CD4-positive, alpha-beta memory T cell (primary cell): ENCODE measurements at regions of chr4 and their contacts with region 1.

Region 1: DNA sequence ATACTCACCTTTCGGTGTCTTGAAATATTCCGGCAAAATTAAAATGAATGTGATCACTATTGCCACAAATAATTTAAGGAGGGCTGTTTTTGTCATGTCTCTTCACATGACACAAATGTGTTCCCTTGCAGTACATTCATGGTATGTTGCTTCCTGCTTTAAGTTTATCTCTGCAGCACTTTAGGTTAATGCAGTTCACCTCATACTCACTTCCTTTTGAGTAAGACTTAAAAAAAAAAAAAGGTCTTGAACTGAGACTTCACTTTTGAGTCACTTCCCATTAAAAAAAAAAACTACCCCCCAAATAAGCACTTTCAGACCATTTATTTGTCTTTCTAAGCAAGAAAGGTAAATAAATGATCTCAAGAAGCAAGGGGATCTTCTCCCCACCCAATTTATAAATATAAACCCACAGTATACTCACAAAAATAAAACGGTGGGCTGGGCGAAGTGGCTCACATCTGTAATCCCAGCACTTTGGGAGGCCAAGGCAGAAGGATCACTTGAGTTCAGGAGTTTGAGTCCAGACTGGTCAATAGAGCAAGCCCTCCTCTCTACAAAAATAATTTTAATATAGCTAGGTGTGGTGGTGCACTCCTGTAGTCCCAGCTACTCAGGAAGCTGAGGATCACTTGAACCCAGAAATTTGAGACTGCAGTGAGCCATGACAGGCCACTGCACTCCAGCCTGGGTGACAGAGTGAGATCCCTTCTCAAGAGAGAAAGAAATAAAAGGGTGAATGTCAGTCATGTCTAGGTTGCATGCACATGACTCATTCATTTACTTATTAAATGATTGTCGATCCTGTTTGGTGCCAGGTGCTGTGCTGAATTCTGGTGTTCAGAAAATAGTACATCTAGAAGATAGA is at the start of gene TMEM156:
- DNase-seq: peak; percentile 65 to 81 (median 70)
- H3K4me3 ChIP-seq: peak within 1 kb of the TSS; percentile 51 to 65
- H3K4me3 Mint-ChIP-seq: peak within 1 kb of the TSS; percentile 75 to 93 (median 89)
- H3K27ac ChIP-seq: peak within 1 kb of the TSS; percentile 68
- H3K27ac Mint-ChIP-seq: peak within 1 kb of the TSS; percentile 85 to 97 (median 93)
- H3K4me1 ChIP-seq: peaks cover 43% of the 10 kb centered on the region
- H3K4me1 Mint-ChIP-seq: peaks cover 20 to 55% (median 36%) of the 10 kb centered on the region in 4 donors
- H3K27me3 ChIP-seq: no peaks in the 10 kb centered on the region
- H3K27me3 Mint-ChIP-seq: no peaks in the 10 kb centered on the region
- total RNA-seq, gene TMEM156: 16.8 to 19.3 TPM

Region 2: DNA sequence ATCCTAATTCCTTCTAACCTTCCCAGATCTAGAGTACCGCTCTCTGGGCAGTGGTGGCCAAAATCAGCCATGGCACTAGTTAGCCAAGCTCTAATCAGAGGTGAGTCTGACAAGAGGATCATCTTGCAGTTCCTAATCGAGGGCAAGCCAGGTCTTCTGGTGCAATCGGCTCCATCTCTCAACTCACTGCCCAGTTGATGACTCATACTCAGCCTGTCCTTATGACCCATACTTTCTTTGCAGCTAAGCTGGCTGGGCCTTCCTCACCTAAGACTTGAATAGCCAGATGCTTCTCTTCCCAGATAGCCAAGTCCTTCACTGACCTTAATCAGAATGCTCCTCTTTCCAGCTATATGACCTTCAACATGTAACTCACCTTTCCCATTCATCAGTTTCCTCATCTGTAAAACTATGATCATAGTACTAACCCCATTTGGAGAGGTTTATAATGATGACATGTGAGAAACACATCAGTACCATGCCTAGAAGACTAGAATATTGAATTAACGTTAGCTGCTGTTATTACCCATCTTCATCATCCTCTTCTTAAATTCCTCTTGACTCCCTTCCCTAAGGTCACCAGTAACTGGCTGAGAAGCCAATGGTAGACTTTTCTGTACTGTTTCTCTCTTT is 1403.4 kb before region 1 on chr4:
- CTCF ChIA-PET with region 1: no interaction called
- POLR2A ChIA-PET with region 1: no interaction called
- intact Hi-C with region 1: no loop called
- DNase-seq: no peak
- H3K4me3 ChIP-seq: no peak overlapping the region
- H3K4me3 Mint-ChIP-seq: no peak overlapping the region
- H3K27ac ChIP-seq: no peak overlapping the region
- H3K27ac Mint-ChIP-seq: peak overlapping the region in 2 of 7 donors; percentile 1 to 52
- H3K4me1 ChIP-seq: no peaks in the 10 kb centered on the region
- H3K4me1 Mint-ChIP-seq: peaks cover 0 to 2% (median 1%) of the 10 kb centered on the region in 4 donors
- H3K27me3 ChIP-seq: no peaks in the 10 kb centered on the region
- H3K27me3 Mint-ChIP-seq: no peaks in the 10 kb centered on the region

Region 3: GRCh38 chr4:38948551-38948950 is 83.9 kb before region 1 on chr4:
- CTCF ChIA-PET with region 1: interaction called, 4 read pairs
- POLR2A ChIA-PET with region 1: interaction called, 4 read pairs
- intact Hi-C with region 1: loop called (anchors 5 kb)
- DNase-seq: no peak
- H3K4me3 ChIP-seq: no peak overlapping the region
- H3K4me3 Mint-ChIP-seq: no peak overlapping the region
- H3K27ac ChIP-seq: no peak overlapping the region
- H3K27ac Mint-ChIP-seq: peak overlapping the region; percentile 83 to 100 (median 97)
- H3K4me1 ChIP-seq: peaks cover 21% of the 10 kb centered on the region
- H3K4me1 Mint-ChIP-seq: peaks cover 18 to 25% (median 19%) of the 10 kb centered on the region in 4 donors
- H3K27me3 ChIP-seq: no peaks in the 10 kb centered on the region
- H3K27me3 Mint-ChIP-seq: peaks cover 0 to 2% of the 10 kb centered on the region in 2 donors

Region 4: GRCh38 chr4:38980903-38981676 is 51.4 kb before region 1 on chr4:
- CTCF ChIA-PET with region 1: interaction called, 3 read pairs
- POLR2A ChIA-PET with region 1: interaction called, 3 read pairs
- intact Hi-C with region 1: loop called (anchors 5 kb)
- DNase-seq: no peak
- H3K4me3 ChIP-seq: no peak overlapping the region
- H3K4me3 Mint-ChIP-seq: peak overlapping the region in 2 of 8 donors; percentile 8 to 17
- H3K27ac ChIP-seq: no peak overlapping the region
- H3K27ac Mint-ChIP-seq: peak overlapping the region in 6 of 7 donors; percentile 7 to 89 (median 37)
- H3K4me1 ChIP-seq: peaks cover 19% of the 10 kb centered on the region
- H3K4me1 Mint-ChIP-seq: peaks cover 20 to 30% (median 26%) of the 10 kb centered on the region in 4 donors
- H3K27me3 ChIP-seq: no peaks in the 10 kb centered on the region
- H3K27me3 Mint-ChIP-seq: no peaks in the 10 kb centered on the region

Region 5: GRCh38 chr4:39067451-39067850 is 35.0 kb after region 1 on chr4:
- CTCF ChIA-PET with region 1: no interaction called
- POLR2A ChIA-PET with region 1: interaction called, 3 read pairs
- intact Hi-C with region 1: loop called (anchors 5 kb)
- DNase-seq: no peak
- H3K4me3 ChIP-seq: no peak overlapping the region
- H3K4me3 Mint-ChIP-seq: no peak overlapping the region
- H3K27ac ChIP-seq: no peak overlapping the region
- H3K27ac Mint-ChIP-seq: no peak overlapping the region
- H3K4me1 ChIP-seq: peaks cover 3% of the 10 kb centered on the region
- H3K4me1 Mint-ChIP-seq: peaks cover 8 to 33% (median 19%) of the 10 kb centered on the region in 4 donors
- H3K27me3 ChIP-seq: no peaks in the 10 kb centered on the region
- H3K27me3 Mint-ChIP-seq: no peaks in the 10 kb centered on the region

Region 6: DNA sequence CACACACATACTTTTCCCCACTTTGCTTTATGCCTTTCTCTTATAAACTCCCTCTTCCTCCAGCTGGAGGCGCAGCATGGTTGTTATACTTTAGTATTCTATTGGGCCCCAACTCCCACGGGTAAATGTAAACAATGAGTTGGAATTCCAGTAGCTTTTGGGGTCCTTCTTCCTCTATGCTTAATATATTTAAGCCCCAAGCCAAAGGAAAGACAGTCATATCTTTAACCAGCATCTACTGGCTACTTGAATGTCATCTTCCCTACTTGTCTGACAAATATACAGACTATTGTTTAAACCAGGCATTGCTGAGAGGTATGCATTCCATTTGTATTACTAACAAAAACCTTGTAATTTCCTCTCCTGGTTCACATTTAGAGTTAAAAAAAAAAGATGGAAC is 222.8 kb after region 1 on chr4:
- CTCF ChIA-PET with region 1: no interaction called
- POLR2A ChIA-PET with region 1: no interaction called
- intact Hi-C with region 1: no loop called
- DNase-seq: no peak
- H3K4me3 ChIP-seq: no peak overlapping the region
- H3K4me3 Mint-ChIP-seq: no peak overlapping the region
- H3K27ac ChIP-seq: no peak overlapping the region
- H3K27ac Mint-ChIP-seq: no peak overlapping the region
- H3K4me1 ChIP-seq: no peaks in the 10 kb centered on the region
- H3K4me1 Mint-ChIP-seq: no peaks in the 10 kb centered on the region
- H3K27me3 ChIP-seq: no peaks in the 10 kb centered on the region
- H3K27me3 Mint-ChIP-seq: no peaks in the 10 kb centered on the region

Region 7: DNA sequence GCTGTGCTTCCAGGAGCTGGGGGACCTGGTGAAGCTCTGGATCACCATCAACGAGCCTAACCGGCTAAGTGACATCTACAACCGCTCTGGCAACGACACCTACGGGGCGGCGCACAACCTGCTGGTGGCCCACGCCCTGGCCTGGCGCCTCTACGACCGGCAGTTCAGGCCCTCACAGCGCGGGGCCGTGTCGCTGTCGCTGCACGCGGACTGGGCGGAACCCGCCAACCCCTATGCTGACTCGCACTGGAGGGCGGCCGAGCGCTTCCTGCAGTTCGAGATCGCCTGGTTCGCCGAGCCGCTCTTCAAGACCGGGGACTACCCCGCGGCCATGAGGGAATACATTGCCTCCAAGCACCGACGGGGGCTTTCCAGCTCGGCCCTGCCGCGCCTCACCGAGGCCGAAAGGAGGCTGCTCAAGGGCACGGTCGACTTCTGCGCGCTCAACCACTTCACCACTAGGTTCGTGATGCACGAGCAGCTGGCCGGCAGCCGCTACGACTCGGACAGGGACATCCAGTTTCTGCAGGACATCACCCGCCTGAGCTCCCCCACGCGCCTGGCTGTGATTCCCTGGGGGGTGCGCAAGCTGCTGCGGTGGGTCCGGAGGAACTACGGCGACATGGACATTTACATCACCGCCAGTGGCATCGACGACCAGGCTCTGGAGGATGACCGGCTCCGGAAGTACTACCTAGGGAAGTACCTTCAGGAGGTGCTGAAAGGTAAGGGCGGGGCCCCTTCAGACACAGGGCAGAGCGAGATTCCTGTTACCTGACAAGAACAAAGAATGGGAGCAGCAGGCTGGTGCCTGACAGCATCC is 414.5 kb after region 1 on chr4:
- CTCF ChIA-PET with region 1: no interaction called
- POLR2A ChIA-PET with region 1: no interaction called
- intact Hi-C with region 1: no loop called
- DNase-seq: peak in 4 of 5 donors; percentile 35 to 71 (median 45)
- H3K4me3 ChIP-seq: no peak overlapping the region
- H3K4me3 Mint-ChIP-seq: peak overlapping the region; percentile 40 to 75 (median 70)
- H3K27ac ChIP-seq: peak overlapping the region; percentile 31
- H3K27ac Mint-ChIP-seq: peak overlapping the region in 5 of 7 donors; percentile 56 to 66 (median 61)
- H3K4me1 ChIP-seq: peaks cover 8% of the 10 kb centered on the region
- H3K4me1 Mint-ChIP-seq: peaks cover 0 to 12% (median 7%) of the 10 kb centered on the region in 4 donors
- H3K27me3 ChIP-seq: no peaks in the 10 kb centered on the region
- H3K27me3 Mint-ChIP-seq: no peaks in the 10 kb centered on the region